Calu3 (cell line): ENCODE measurements at regions of chr1 and their contacts with region 1.

Region 1: DNA sequence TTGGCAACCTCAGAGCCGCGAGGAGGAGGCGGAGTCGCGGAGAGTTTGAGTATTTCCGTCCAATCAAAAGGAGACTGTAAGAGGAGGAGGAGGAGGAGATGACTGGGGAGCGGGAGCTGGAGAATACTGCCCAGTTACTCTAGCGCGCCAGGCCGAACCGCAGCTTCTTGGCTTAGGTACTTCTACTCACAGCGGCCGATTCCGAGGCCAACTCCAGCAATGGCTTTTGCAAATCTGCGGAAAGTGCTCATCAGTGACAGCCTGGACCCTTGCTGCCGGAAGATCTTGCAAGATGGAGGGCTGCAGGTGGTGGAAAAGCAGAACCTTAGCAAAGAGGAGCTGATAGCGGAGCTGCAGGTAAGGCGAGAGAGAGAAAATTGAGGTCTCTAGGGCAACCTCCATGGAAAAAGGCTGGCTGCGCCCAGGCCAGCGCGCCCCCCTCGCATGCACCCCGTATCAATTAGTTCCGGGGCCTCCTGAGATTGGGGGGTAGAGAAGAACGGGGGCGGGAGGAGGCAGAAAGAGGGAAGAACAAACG is at the start of gene PHGDH:
- DNase-seq: peak; percentile 66
- H3K4me3 Mint-ChIP-seq: peak within 1 kb of the TSS; percentile 90
- H3K27ac Mint-ChIP-seq: peak within 1 kb of the TSS; percentile 98
- H3K4me1 Mint-ChIP-seq: peaks cover 32% of the 10 kb centered on the region
- H3K27me3 Mint-ChIP-seq: no peaks in the 10 kb centered on the region
- CTCF ChIP-seq: no peak
- total RNA-seq, gene PHGDH: 155 and 199 TPM in 2 replicates

Region 2: DNA sequence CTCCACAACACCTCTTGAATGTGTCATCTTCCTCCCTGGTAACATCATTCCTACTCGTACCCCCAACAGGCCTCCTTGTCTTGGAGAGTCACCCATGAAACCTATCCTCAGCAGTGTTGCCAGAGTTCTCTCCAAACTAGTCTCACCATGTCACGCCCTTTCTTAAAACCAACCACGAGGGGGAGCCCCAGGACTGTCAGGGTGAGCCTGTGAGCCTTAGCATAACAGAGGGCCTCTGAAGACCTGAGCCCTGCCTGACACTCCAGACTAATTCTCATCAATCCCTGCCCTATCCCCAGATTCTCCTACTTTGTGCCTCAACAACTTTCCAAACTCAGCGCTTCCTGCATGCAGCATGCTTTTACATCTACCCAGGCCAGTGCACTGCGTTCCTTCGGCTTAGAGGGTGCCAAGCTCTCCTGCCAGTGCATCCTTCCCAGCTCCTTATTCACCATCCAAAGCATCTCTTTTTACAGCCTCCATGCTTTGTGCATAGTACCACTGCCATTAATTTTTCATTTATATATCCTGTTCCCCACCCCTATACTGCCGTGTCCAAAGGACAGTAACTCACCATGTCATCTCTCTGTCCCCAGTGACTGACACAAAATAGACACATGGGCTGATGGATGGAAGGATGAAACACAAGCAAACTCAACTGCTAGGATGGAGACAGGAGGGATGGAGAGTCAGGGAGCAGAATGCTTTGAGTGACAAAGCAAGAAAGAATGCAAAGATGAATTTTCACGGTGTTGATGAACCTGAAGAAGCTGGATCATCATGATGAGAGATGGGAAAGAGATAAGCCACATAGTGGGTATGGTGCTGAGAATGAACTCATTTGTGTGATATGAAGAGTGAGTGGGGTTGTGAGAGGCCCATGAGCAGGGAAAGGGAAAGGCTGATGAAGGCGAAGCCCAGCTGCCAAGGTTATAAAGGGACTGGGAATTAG is 97.8 kb before region 1 on chr1:
- CTCF ChIA-PET with region 1: no interaction called
- intact Hi-C with region 1: loop called (anchors 5 kb)
- DNase-seq: peak; percentile 88
- H3K4me3 Mint-ChIP-seq: no peak overlapping the region
- H3K27ac Mint-ChIP-seq: no peak overlapping the region
- H3K4me1 Mint-ChIP-seq: peaks cover 6% of the 10 kb centered on the region
- H3K27me3 Mint-ChIP-seq: no peaks in the 10 kb centered on the region
- CTCF ChIP-seq: peak; percentile 65

Region 3: GRCh38 chr1:119906927-119907652 is 195.2 kb after region 1 on chr1:
- CTCF ChIA-PET with region 1: no interaction called
- intact Hi-C with region 1: no loop called
- DNase-seq: no peak
- H3K4me3 Mint-ChIP-seq: no peak overlapping the region
- H3K27ac Mint-ChIP-seq: no peak overlapping the region
- H3K4me1 Mint-ChIP-seq: peaks cover 7% of the 10 kb centered on the region
- H3K27me3 Mint-ChIP-seq: no peaks in the 10 kb centered on the region
- CTCF ChIP-seq: no peak